Ascending aorta (tissue), 2 donors: ENCODE measurements at regions of chr1 and their contacts with region 1.

Region 1: GRCh38 chr1:162040681-162041080 is 17.0 kb upstream of the OLFML2B start:
- DNase-seq: no peak
- H3K4me3 ChIP-seq: no peak overlapping the region
- H3K27ac ChIP-seq: no peak overlapping the region
- H3K4me1 ChIP-seq: peaks cover 0 to 3% of the 10 kb centered on the region in 2 donors
- H3K27me3 ChIP-seq: no peaks in the 10 kb centered on the region
- CTCF ChIP-seq: no peak

Region 2: GRCh38 chr1:160997323-160998038 is 1043.2 kb before region 1 on chr1:
- intact Hi-C with region 1: no loop called
- DNase-seq: peak in 1 of 2 donors; percentile 75
- H3K4me3 ChIP-seq: no peak overlapping the region
- H3K27ac ChIP-seq: peak overlapping the region in 1 of 2 donors; percentile 16
- H3K4me1 ChIP-seq: no peaks in the 10 kb centered on the region
- H3K27me3 ChIP-seq: no peaks in the 10 kb centered on the region
- CTCF ChIP-seq: peak in 2 of 3 experiments; percentile 41 to 43

Region 3: DNA sequence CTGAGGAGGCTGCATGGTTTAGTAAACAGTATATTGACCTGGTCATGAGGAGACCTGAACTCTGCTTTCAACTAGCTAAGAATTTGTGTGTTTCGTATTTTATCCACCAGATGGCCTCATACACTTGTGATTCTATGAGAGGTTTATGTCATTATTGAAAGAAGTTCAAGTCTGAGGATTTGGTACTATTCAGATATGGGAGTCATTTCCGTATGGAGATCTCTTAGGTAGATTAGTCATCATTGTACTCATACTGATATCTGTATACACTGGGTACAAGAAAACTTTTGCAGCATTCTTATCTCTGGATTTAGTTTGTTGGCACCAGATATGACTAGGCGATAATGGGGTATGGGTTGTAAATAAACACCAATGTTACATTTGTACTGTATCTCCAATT is 247.9 kb before region 1 on chr1:
- intact Hi-C with region 1: loop called (anchors 1 kb)
- DNase-seq: no peak
- H3K4me3 ChIP-seq: no peak overlapping the region
- H3K27ac ChIP-seq: no peak overlapping the region
- H3K4me1 ChIP-seq: no peaks in the 10 kb centered on the region
- H3K27me3 ChIP-seq: no peaks in the 10 kb centered on the region
- CTCF ChIP-seq: peak; percentile 23 to 60 (median 40)

Region 4: DNA sequence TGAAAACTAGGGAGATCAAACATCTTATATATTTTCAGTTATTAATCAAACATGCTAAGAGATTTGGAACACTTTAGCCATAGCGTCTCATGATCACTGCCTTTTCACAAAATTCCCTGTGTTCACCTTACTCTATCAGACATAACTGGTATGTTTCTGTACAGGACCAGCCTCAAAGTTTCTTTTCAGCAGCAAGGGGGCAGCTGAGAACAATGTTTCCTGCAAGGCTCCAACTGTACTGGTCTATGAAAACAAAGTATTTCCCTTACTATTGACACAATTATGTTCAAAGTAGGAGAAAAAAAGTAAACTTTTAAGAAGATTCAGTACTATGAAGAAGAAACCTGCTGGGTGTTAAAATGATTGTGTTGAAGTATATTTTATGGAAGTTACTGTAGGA is 176.1 kb before region 1 on chr1:
- intact Hi-C with region 1: loop called (anchors 1 kb)
- DNase-seq: no peak
- H3K4me3 ChIP-seq: no peak overlapping the region
- H3K27ac ChIP-seq: no peak overlapping the region
- H3K4me1 ChIP-seq: peaks cover 0 to 3% of the 10 kb centered on the region in 2 donors
- H3K27me3 ChIP-seq: no peaks in the 10 kb centered on the region
- CTCF ChIP-seq: peak; percentile 6 to 53 (median 33)

Region 5: GRCh38 chr1:162003826-162004208 is 36.9 kb before region 1 on chr1:
- intact Hi-C with region 1: no loop called
- DNase-seq: peak in 1 of 2 donors; percentile 72
- H3K4me3 ChIP-seq: peak overlapping the region in 1 of 2 donors; percentile 24
- H3K27ac ChIP-seq: peak overlapping the region; percentile 43 to 68
- H3K4me1 ChIP-seq: peaks cover 0 to 3% of the 10 kb centered on the region in 2 donors
- H3K27me3 ChIP-seq: no peaks in the 10 kb centered on the region
- CTCF ChIP-seq: no peak